Gastrocnemius medialis (tissue), 4 donors: ENCODE measurements at regions of chr9 and their contacts with region 1.

Region 1: DNA sequence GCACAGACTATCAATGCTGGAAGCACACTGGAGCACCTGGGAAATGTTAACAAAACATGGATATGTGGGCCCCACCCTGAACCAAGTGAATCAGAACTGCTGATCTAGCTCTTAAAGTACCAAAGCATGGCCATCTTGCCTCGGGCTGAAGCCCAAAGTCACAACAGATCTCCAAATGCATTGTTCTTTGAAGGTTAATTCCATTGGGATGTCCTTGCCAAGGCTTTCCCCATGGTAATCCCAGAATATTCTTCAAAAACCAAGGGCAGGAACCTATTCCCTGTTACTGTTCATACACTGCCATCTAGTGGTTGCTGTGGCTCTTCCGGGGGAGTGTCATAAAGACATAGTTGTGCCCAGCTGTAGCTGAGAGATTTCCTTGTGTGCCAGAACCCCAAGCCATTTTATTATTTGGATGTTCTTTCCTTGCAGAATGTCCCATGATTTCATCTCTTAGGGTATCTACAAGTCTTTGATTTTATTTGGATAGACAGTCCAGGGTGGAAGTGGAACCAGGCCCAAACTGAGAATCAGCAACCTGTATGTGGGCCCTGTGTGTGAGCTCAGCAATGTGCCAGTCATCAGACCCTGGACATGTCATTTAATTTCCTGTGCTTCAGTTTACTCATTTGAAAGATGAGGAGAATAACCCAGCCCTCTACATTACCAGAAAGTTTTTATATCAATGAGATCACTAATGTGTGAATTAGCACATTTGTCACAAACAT is 290.0 kb downstream of the ACTL7B start:
- DNase-seq: peak in 1 of 2 donors; percentile 42
- ATAC-seq: peak; percentile 87 to 93
- H3K4me3 ChIP-seq: no peak overlapping the region
- H3K27ac ChIP-seq: no peak overlapping the region
- H3K4me1 ChIP-seq: peaks cover 0 to 23% of the 10 kb centered on the region in 2 donors
- H3K27me3 ChIP-seq: no peaks in the 10 kb centered on the region
- CTCF ChIP-seq: peak; percentile 84 to 91 (median 87)
- POLR2A ChIP-seq: no peak

Region 2: GRCh38 chr9:107465467-107466451 is 1100.1 kb before region 1 on chr9:
- in situ Hi-C with region 1: loop called (anchors 5 to 10 kb)
- intact Hi-C with region 1: loop called (anchors 1 kb)
- DNase-seq: peak; percentile 41 to 63
- ATAC-seq: peak; percentile 89 to 91
- H3K4me3 ChIP-seq: peak overlapping the region; percentile 58 to 76 (median 66)
- H3K27ac ChIP-seq: peak overlapping the region in 2 of 4 donors; percentile 21 to 35
- H3K4me1 ChIP-seq: no peaks in the 10 kb centered on the region
- H3K27me3 ChIP-seq: peaks cover 0 to 6% (median 4%) of the 10 kb centered on the region in 3 donors
- CTCF ChIP-seq: peak; percentile 86 to 96 (median 91)
- POLR2A ChIP-seq: no peak

Region 3: DNA sequence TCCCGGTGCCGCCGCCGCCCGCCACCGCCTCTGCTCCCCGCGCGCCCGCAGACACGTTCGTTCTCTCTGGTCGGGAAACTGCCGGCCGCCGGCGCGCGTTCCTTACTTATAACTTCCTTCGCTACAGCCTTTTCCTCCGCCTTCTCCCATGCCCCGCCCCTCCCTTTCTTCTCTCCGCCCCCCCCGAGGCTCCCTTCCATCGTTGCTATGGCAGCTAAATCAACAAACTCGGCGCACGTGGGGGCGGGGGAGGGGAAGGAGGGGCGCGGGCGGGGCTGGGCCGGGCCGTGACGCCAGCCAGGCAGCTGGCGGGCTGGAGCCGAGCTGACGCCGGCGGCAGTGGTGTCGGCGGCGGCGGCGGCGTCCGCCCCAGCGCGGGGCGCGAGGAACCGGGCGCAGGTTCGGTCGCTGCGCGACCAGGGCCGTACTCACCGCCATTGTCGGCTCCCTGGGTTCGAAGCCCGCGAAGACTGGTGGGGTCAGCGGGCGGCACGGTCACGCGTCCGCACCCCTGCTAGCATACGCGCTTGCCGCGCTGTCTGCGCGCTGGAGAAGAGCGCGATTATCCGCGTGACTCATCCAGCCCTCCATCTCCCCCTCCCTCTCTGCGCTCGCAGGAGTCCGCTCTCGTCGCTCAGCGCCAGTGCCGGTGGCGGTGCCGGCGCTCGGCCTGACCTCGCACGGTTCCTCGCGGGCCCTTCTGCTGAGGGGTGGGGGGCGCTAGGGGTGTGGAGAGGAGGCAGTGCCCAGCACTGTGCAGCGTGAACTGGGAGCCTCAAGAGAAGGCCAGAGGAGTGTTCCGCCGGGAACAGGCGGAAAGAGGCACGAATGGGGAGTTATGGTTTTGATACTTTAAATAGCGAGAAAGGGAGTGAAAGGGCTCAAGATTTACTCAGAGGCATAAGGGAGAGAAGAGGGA is 1075.9 kb before region 1 on chr9 and contains the start of gene KLF4:
- in situ Hi-C with region 1: no loop called
- intact Hi-C with region 1: loop called (anchors 5 kb)
- DNase-seq: peak; percentile 89 to 91
- ATAC-seq: peak; percentile 82 to 84
- H3K4me3 ChIP-seq: peak within 1 kb of the TSS; percentile 75 to 91 (median 82)
- H3K27ac ChIP-seq: peak within 1 kb of the TSS; percentile 82 to 90 (median 90)
- H3K4me1 ChIP-seq: peaks cover 8 to 9% of the 10 kb centered on the region in 2 donors
- H3K27me3 ChIP-seq: no peaks in the 10 kb centered on the region
- CTCF ChIP-seq: no peak
- POLR2A ChIP-seq: peak; percentile 94 to 95
- total RNA-seq, gene KLF4: 15.7 to 62.6 (median 32.4) TPM

Region 4: GRCh38 chr9:108272349-108272899 is 293.4 kb before region 1 on chr9:
- in situ Hi-C with region 1: no loop called
- intact Hi-C with region 1: loop called (anchors 5 kb)
- DNase-seq: peak; percentile 6 to 50
- ATAC-seq: peak; percentile 59 to 87
- H3K4me3 ChIP-seq: peak overlapping the region; percentile 2 to 33 (median 26)
- H3K27ac ChIP-seq: peak overlapping the region; percentile 41 to 65 (median 50)
- H3K4me1 ChIP-seq: peaks cover 9 to 13% of the 10 kb centered on the region in 2 donors
- H3K27me3 ChIP-seq: no peaks in the 10 kb centered on the region
- CTCF ChIP-seq: peak; percentile 32 to 71 (median 57)
- POLR2A ChIP-seq: no peak

Region 5: GRCh38 chr9:108468402-108468801 is 97.4 kb before region 1 on chr9:
- in situ Hi-C with region 1: loop called in 2 of 4 experiments (anchors 10 to 25 kb)
- intact Hi-C with region 1: loop called (anchors 1 kb)
- DNase-seq: peak in 1 of 2 donors; percentile 36
- ATAC-seq: peak in 1 of 2 donors; percentile 47
- H3K4me3 ChIP-seq: no peak overlapping the region
- H3K27ac ChIP-seq: peak overlapping the region in 1 of 4 donors; percentile 69
- H3K4me1 ChIP-seq: peaks cover 19 to 31% of the 10 kb centered on the region in 2 donors
- H3K27me3 ChIP-seq: no peaks in the 10 kb centered on the region
- CTCF ChIP-seq: peak; percentile 22 to 50 (median 35)
- POLR2A ChIP-seq: no peak